Naive thymus-derived CD4-positive, alpha-beta T cell (primary cell): ENCODE measurements at regions of chr6 and their contacts with region 1.

Region 1: GRCh38 chr6:83067448-83068413 is at the start of gene DOP1A:
- DNase-seq: peak; percentile 91 to 97 (median 95)
- ATAC-seq: peak; percentile 93
- H3K4me3 ChIP-seq: peak within 1 kb of the TSS; percentile 83
- H3K4me3 Mint-ChIP-seq: peak within 1 kb of the TSS; percentile 89 to 96 (median 94)
- H3K27ac ChIP-seq: peak within 1 kb of the TSS; percentile 93
- H3K27ac Mint-ChIP-seq: peak within 1 kb of the TSS; percentile 85 to 97 (median 94)
- H3K4me1 ChIP-seq: peaks cover 16 to 17% of the 10 kb centered on the region in 2 donors
- H3K4me1 Mint-ChIP-seq: peaks cover 21 to 70% (median 57%) of the 10 kb centered on the region in 7 donors
- H3K27me3 ChIP-seq: no peaks in the 10 kb centered on the region
- H3K27me3 Mint-ChIP-seq: no peaks in the 10 kb centered on the region
- total RNA-seq, gene DOP1A: 13.6 to 33.9 (median 25.7) TPM

Region 2: DNA sequence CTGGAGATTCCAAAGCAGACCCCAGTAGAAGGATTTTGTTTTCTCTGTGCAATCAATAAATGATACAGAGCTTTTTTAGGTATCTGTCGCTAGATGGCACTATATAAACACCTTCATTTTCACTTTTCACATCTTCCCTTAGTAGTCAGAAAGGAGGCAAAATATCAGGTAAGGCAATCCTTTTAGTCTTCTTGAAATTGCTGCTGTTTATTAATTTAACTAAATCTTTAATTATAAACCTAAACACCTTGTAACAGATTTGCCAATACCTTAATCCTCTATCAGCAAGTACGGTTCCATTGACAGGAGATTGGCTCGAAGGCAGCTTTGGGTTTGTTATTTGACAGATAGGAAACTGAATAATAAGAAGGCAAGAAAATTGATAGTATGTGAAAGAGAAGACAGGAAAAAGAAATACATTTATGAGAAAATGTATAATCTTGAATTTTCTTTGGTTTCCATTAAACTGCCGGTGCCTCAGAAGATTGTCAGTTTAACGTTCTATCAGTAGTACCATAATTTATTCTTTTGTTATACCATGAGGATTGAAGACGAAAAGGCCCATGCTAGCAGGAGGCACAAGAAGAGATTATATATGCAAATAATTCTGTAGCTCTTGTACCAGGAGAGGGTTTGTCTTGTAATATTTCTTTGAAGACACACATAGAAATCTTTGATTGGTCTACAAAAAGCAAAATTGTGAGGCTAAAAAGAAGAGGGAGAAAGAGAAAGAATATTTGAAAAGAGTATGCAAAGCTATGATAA is 796.7 kb before region 1 on chr6:
- CTCF ChIA-PET with region 1: interaction called, 6 read pairs
- POLR2A ChIA-PET with region 1: no interaction called
- intact Hi-C with region 1: loop called in 1 of 2 experiments (anchors 2 kb)
- DNase-seq: peak in 5 of 9 donors; percentile 14 to 38 (median 27)
- ATAC-seq: peak; percentile 72
- H3K4me3 ChIP-seq: no peak overlapping the region
- H3K4me3 Mint-ChIP-seq: no peak overlapping the region
- H3K27ac ChIP-seq: no peak overlapping the region
- H3K27ac Mint-ChIP-seq: no peak overlapping the region
- H3K4me1 ChIP-seq: no peaks in the 10 kb centered on the region
- H3K4me1 Mint-ChIP-seq: no peaks in the 10 kb centered on the region
- H3K27me3 ChIP-seq: no peaks in the 10 kb centered on the region
- H3K27me3 Mint-ChIP-seq: peaks cover 0 to 10% (median 0%) of the 10 kb centered on the region in 5 donors

Region 3: DNA sequence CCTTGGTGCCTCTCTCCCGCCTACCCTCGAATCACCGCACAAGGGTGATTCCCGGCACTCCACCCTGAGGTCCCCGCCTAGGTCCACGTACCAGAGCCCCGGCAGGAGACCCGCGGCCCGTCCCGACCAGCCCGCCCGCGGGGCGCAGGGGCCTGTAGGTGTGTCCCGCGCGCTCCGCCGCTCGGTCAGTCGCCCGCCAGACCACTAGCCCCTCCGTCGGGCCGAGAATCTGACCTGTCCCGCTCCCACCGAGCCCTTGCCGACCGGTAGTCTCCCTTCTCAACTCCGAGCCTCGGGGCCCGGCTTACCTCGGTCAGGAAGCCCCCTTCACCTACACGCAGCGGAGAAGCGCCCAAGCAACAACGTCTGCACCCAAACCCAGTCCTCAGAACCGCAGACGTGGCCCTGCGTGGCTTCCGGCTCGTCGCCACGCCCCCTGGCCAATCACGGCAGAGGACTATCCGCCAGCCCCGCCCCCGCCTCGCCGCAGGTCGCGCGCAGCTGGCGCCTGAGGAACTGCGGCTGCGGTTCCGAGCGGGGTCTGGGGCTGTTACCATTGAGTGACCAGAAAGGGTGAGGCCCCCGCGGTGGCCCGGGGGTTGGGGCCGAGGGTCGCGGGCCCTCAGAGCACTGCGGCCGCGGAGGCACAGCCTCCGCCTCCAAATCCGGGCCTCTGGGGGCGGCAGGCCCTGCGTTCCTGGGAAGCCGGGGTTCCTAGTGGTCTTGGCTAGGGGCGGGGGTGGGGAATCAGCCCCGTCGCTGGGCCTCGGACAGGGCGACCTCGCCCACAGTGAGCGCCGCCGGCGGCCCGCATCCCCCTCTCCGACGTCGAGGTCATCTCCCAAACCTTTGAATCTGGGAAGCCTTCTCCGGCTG is 125.4 kb after region 1 on chr6 and contains the starts of genes PGM3 and RWDD2A:
- CTCF ChIA-PET with region 1: interaction called, 9 read pairs
- POLR2A ChIA-PET with region 1: interaction called, 12 read pairs
- intact Hi-C with region 1: loop called (anchors 1 kb)
- DNase-seq: peak; percentile 84 to 90 (median 88)
- ATAC-seq: peak; percentile 99
- H3K4me3 ChIP-seq: peak within 1 kb of the TSS; percentile 93
- H3K4me3 Mint-ChIP-seq: peak within 1 kb of the TSS; percentile 92 to 99 (median 98)
- H3K27ac ChIP-seq: peak within 1 kb of the TSS; percentile 91
- H3K27ac Mint-ChIP-seq: peak within 1 kb of the TSS; percentile 89 to 99 (median 97)
- H3K4me1 ChIP-seq: peaks cover 5 to 12% of the 10 kb centered on the region in 2 donors
- H3K4me1 Mint-ChIP-seq: peaks cover 24 to 68% (median 63%) of the 10 kb centered on the region in 7 donors
- H3K27me3 ChIP-seq: no peaks in the 10 kb centered on the region
- H3K27me3 Mint-ChIP-seq: peaks cover 0 to 6% (median 0%) of the 10 kb centered on the region in 5 donors
- total RNA-seq, gene PGM3: 22.0 to 37.3 (median 27.6) TPM
- total RNA-seq, gene RWDD2A: 1.8 to 6.4 (median 2.7) TPM

Region 4: GRCh38 chr6:83514866-83515466 is 447.2 kb after region 1 on chr6:
- CTCF ChIA-PET with region 1: no interaction called
- POLR2A ChIA-PET with region 1: no interaction called
- intact Hi-C with region 1: loop called (anchors 1 to 2 kb)
- DNase-seq: peak in 5 of 9 donors; percentile 6 to 22 (median 18)
- ATAC-seq: peak; percentile 54
- H3K4me3 ChIP-seq: no peak overlapping the region
- H3K4me3 Mint-ChIP-seq: no peak overlapping the region
- H3K27ac ChIP-seq: no peak overlapping the region
- H3K27ac Mint-ChIP-seq: no peak overlapping the region
- H3K4me1 ChIP-seq: peaks cover 0 to 6% of the 10 kb centered on the region in 2 donors
- H3K4me1 Mint-ChIP-seq: peaks cover 0 to 17% (median 8%) of the 10 kb centered on the region in 7 donors
- H3K27me3 ChIP-seq: peaks cover 0 to 10% of the 10 kb centered on the region in 2 donors
- H3K27me3 Mint-ChIP-seq: peaks cover 36 to 59% (median 50%) of the 10 kb centered on the region in 5 donors